Right cardiac atrium (tissue), 5 donors: ENCODE measurements at regions of chr6 and their contacts with region 1.

Region 1: GRCh38 chr6:38493931-38494547 is 145.7 kb downstream of the BTBD9 start:
- DNase-seq: peak; percentile 51 to 82 (median 67)
- ATAC-seq: peak in 1 of 2 donors; percentile 23
- H3K4me3 ChIP-seq: no peak overlapping the region
- H3K27ac ChIP-seq: no peak overlapping the region
- H3K4me1 ChIP-seq: no peaks in the 10 kb centered on the region
- H3K27me3 ChIP-seq: no peaks in the 10 kb centered on the region

Region 2: GRCh38 chr6:37691904-37692806 is 801.9 kb before region 1 on chr6:
- intact Hi-C with region 1: loop called in 1 of 4 experiments (anchors 10 kb)
- DNase-seq: peak; percentile 63 to 91 (median 86)
- ATAC-seq: peak; percentile 66 to 82
- H3K4me3 ChIP-seq: no peak overlapping the region
- H3K27ac ChIP-seq: no peak overlapping the region
- H3K4me1 ChIP-seq: peaks cover 4% of the 10 kb centered on the region
- H3K27me3 ChIP-seq: no peaks in the 10 kb centered on the region

Region 3: DNA sequence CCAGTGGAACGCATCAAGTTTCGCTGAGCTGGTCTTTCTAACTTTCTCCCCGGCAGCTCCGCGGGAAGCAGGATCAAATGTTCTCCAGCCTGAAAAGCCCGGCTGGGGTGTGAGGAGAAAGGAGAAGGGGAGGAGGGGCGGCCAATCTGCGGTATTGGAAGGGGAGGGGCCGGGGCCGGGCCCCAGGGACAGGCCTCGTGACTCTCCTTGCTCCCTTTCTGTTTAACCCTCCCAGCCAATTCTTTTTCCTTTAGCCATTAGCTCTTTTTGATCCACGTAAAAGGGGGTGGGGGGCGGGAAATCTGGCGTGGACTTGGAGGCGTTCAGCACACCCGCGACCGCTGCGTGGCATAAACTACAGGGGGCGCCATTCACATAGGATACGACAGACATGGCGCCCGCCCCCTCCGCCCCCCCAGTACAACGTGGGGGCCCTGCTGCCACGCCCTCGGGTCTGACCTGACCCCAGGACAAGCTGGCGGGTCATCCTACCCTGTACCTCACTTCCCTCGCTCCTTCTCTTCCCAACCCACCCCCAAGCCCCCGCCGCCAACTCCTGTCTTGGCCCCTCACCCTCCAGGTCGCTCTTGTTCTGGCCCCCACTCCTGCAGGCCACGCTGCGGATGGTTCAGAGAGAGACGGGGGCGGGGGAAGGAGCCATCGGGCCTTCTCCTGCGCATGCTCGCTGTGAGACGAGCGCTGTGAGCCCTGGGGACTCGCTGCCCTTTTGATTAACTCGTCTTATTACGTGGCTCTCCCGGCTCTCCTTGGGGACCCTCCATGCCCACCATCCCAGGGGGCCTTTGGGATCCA is 788.6 kb before region 1 on chr6:
- intact Hi-C with region 1: loop called in 1 of 4 experiments (anchors 10 kb)
- DNase-seq: peak; percentile 87 to 94 (median 91)
- ATAC-seq: peak; percentile 92 to 94
- H3K4me3 ChIP-seq: peak overlapping the region; percentile 53
- H3K27ac ChIP-seq: peak overlapping the region; percentile 71
- H3K4me1 ChIP-seq: no peaks in the 10 kb centered on the region
- H3K27me3 ChIP-seq: no peaks in the 10 kb centered on the region

Region 4: GRCh38 chr6:37791156-37791919 is 702.7 kb before region 1 on chr6:
- intact Hi-C with region 1: loop called in 3 of 4 experiments (anchors 5 to 10 kb)
- DNase-seq: peak; percentile 93 to 96 (median 96)
- ATAC-seq: peak; percentile 98 to 99
- H3K4me3 ChIP-seq: no peak overlapping the region
- H3K27ac ChIP-seq: no peak overlapping the region
- H3K4me1 ChIP-seq: no peaks in the 10 kb centered on the region
- H3K27me3 ChIP-seq: no peaks in the 10 kb centered on the region

Region 5: DNA sequence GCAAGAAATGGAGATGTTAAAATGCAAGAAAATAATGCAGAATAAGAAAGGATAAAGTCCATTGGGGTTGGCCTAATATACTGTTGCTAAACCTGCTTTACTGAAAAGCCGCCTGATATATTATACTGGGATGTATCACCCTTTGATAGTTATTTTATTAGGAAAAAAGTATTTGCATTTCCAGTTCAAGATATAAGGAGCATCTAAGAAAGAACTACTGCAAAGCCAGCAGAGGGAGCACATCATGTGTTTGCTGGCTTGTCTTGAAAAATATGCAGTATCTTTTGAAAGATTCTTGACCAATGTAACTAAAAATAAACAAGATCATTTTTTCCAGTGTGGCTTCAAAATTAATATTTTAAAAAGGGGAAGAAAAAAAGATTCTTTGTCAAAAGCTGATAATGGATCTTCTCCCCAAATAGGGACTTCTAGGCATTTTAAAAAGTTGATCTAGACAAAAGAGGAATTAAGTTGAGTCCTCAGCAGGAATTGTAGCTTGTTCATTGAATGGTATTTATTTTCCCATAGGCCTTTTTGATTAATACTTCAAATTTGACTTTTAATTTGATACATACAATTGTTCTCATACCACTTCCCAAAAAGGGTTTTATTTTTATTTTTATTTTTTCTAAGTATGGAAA is 459.6 kb before region 1 on chr6:
- intact Hi-C with region 1: loop called in 2 of 4 experiments (anchors 10 kb)
- DNase-seq: no peak
- ATAC-seq: no peak
- H3K4me3 ChIP-seq: no peak overlapping the region
- H3K27ac ChIP-seq: no peak overlapping the region
- H3K4me1 ChIP-seq: no peaks in the 10 kb centered on the region
- H3K27me3 ChIP-seq: no peaks in the 10 kb centered on the region